ENCODE measurements at regions of chr12 and their contacts with region 1.

Region 1: DNA sequence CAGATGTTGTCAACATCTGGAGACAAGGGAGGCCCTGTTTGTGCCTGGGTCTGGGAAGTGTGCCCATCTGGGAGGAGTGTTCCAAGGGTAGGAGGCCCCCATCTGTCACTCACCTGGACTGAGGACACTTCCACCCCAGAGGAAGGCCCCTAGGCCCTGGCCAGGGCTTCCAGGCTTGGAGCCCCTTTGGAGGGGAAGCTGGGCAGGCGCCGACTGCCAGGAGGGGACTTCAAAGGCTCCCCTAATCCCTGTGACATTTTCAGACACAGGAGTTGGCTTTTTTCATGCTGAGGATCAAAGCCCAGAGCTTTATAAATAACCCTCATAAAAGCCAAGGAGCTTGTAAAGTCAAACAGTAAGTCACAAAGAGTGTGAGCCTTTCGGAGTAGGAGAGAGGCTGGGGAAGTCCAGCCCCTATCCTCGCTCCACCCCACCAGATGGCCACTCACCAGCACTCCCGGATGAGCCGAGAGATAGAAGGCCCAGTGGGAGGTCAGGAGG is 17.6 kb upstream of the FAM222A start:
- DNase-seq: peak; percentile 89 to 91
- H3K4me3 ChIP-seq: no peak overlapping the region
- H3K4me3 Mint-ChIP-seq: peak overlapping the region; percentile 42
- H3K27ac Mint-ChIP-seq: peak overlapping the region; percentile 76
- H3K4me1 ChIP-seq: peaks cover 42% of the 10 kb centered on the region
- H3K4me1 Mint-ChIP-seq: peaks cover 35% of the 10 kb centered on the region
- H3K27me3 ChIP-seq: no peaks in the 10 kb centered on the region
- H3K27me3 Mint-ChIP-seq: no peaks in the 10 kb centered on the region
- CTCF ChIP-seq: no peak

Region 2: DNA sequence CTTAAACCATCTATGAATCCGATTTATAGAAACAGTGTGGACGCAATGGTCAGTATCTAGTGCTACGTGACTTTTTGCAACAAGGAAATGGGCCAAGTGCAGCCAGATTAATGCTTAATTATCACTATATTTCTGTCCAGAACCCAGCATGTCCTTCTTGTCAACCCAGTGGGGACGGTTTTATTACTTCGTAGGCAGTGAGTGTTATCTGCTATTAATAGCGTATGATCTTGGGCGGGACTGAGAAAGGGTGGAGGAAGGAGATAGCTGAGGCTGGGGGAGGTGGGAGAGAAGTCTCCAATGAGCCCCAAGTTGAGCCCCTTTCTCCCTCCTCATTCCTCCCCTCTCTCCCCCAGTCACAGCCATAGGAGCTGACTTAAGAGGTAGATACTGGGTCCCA is 42.1 kb before region 1 on chr12:
- CTCF ChIA-PET with region 1: no interaction called
- POLR2A ChIA-PET with region 1: no interaction called
- intact Hi-C with region 1: loop called (anchors 1 kb)
- DNase-seq: no peak
- H3K4me3 ChIP-seq: no peak overlapping the region
- H3K4me3 Mint-ChIP-seq: no peak overlapping the region
- H3K27ac Mint-ChIP-seq: peak overlapping the region; percentile 3
- H3K4me1 ChIP-seq: peaks cover 31% of the 10 kb centered on the region
- H3K4me1 Mint-ChIP-seq: peaks cover 10% of the 10 kb centered on the region
- H3K27me3 ChIP-seq: no peaks in the 10 kb centered on the region
- H3K27me3 Mint-ChIP-seq: no peaks in the 10 kb centered on the region
- CTCF ChIP-seq: no peak

Region 3: DNA sequence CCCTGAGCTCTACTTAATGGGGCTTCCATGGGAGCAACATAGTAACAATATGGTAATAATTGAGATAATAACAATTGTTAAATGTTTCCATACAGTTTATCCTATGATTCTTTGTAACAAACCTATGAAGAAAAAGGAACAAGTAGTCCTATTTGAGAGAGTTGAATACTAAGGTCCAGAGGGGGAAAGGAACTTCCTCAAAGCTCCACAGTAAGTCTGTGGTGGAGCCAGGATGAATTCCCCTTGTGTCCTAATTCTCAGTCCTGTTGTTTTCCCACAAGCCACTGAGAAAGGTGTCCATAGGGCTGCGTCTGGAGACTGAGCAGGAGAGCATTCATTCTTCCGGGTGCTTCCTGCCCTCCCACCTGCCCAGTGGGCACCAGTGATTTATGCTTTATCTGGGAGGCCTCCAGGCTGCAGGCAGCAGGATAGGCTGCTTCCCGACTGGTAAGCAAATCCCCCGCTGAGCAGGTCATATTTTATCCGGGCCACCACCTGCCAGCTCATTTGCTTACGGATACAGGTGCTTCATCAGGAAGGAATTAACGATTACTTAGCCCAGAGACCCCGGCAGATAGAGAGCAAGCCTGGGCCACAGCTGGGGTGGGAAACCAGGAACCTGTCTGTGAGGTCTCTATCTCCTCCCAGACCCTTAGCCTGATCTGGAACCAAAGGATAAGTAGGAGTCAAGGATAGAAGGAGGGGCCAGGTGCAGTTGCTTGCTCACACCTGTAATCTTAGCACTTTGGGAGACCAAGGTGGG is 16.3 kb before region 1 on chr12:
- CTCF ChIA-PET with region 1: no interaction called
- POLR2A ChIA-PET with region 1: no interaction called
- intact Hi-C with region 1: loop called (anchors 2 kb)
- DNase-seq: no peak
- H3K4me3 ChIP-seq: no peak overlapping the region
- H3K4me3 Mint-ChIP-seq: no peak overlapping the region
- H3K27ac Mint-ChIP-seq: no peak overlapping the region
- H3K4me1 ChIP-seq: 0 out of 2 replicates have a peak, but pooled peaks cover 9% of the 10 kb centered on the region
- H3K4me1 Mint-ChIP-seq: no peaks in the 10 kb centered on the region
- H3K27me3 ChIP-seq: no peaks in the 10 kb centered on the region
- H3K27me3 Mint-ChIP-seq: no peaks in the 10 kb centered on the region
- CTCF ChIP-seq: no peak

Region 4: DNA sequence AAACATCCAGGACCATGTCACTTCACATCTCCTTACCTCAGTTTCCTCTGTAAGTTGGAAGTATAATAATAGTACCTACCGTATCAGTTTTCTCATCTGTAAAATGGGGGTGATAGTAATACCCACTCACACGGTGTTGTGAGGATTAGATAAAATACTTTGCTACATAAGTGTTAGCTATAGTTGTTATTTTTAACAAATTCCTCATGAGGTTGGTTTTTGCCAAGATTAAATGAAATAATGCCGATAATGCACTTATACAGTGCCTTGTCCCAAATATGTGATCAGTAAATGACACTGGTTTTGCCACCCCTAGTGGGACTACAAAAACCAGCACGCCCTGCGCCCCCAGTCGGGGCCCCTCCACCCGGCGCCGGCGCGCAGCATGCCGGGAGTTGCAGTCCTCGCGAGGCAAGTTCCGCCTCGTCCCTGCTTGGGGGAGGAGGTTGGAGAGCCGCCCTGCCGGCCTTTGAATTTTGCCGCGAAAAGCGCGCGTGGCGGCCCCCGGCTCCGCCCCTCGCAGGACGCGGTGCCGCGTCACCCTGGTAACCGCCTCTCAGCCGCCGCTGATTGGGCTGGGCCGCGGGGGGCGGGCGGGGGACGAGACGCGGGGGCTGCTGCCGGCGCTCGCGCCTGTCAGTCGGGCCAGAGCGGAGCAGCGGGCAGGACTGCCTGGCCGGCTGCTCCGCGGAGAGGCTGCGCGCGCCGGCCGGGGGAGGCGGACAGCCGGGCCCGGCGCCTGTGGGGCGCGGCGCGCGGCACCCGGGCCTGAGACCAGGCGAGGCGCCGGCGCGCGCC is 17.4 kb after region 1 on chr12 and contains the start of gene FAM222A:
- CTCF ChIA-PET with region 1: interaction called, 3 read pairs
- POLR2A ChIA-PET with region 1: interaction called, 3 read pairs
- intact Hi-C with region 1: loop called (anchors 1 kb)
- DNase-seq: peak; percentile 97 to 98
- H3K4me3 ChIP-seq: peak within 1 kb of the TSS; percentile 80
- H3K4me3 Mint-ChIP-seq: peak within 1 kb of the TSS; percentile 70
- H3K27ac Mint-ChIP-seq: no peak within 1 kb of the TSS
- H3K4me1 ChIP-seq: peaks cover 23% of the 10 kb centered on the region
- H3K4me1 Mint-ChIP-seq: peaks cover 22% of the 10 kb centered on the region
- H3K27me3 ChIP-seq: no peaks in the 10 kb centered on the region
- H3K27me3 Mint-ChIP-seq: no peaks in the 10 kb centered on the region
- CTCF ChIP-seq: peak in 1 of 2 experiments; percentile 35
- total RNA-seq, gene FAM222A: 17.4 and 18.0 TPM in 2 replicates

Region 5: GRCh38 chr12:109736552-109737108 is 40.6 kb after region 1 on chr12:
- CTCF ChIA-PET with region 1: interaction called, 11 read pairs
- POLR2A ChIA-PET with region 1: no interaction called
- intact Hi-C with region 1: no loop called
- DNase-seq: peak; percentile 74 to 84
- H3K4me3 ChIP-seq: no peak overlapping the region
- H3K4me3 Mint-ChIP-seq: no peak overlapping the region
- H3K27ac Mint-ChIP-seq: peak overlapping the region; percentile 64
- H3K4me1 ChIP-seq: peaks cover 66% of the 10 kb centered on the region
- H3K4me1 Mint-ChIP-seq: peaks cover 41% of the 10 kb centered on the region
- H3K27me3 ChIP-seq: no peaks in the 10 kb centered on the region
- H3K27me3 Mint-ChIP-seq: no peaks in the 10 kb centered on the region
- CTCF ChIP-seq: no peak

Region 6: GRCh38 chr12:109910969-109911348 is 214.9 kb after region 1 on chr12:
- CTCF ChIA-PET with region 1: no interaction called
- POLR2A ChIA-PET with region 1: no interaction called
- intact Hi-C with region 1: no loop called
- DNase-seq: peak; percentile 63 to 64
- H3K4me3 ChIP-seq: no peak overlapping the region
- H3K4me3 Mint-ChIP-seq: no peak overlapping the region
- H3K27ac Mint-ChIP-seq: no peak overlapping the region
- H3K4me1 ChIP-seq: no peaks in the 10 kb centered on the region
- H3K4me1 Mint-ChIP-seq: no peaks in the 10 kb centered on the region
- H3K27me3 ChIP-seq: no peaks in the 10 kb centered on the region
- H3K27me3 Mint-ChIP-seq: no peaks in the 10 kb centered on the region
- CTCF ChIP-seq: peak; percentile 38 to 63

Measured in Caco-2 (cell line).